Mammary epithelial cell (primary cell): ENCODE measurements at regions of chr6 and their contacts with region 1.

Region 1: DNA sequence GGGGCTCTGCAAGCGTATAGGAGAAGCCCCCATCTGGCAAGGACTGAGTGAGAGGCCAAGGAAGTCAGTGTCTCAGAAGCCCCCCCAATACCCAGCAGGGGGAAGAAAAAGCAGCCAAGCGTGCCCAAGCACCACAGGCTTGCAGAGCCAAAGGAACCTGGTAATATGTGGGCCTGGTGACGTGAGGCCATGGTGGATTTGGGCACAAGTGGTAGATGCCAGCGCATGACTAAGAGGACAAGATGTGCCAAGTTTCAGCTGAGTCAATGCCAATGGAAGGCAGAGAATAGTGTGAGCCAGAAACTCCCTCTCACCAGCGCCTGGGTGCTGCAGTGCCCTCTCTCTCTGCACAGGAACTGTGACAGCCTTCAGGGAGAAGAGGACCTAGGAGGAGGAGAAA is 110.0 kb downstream of the QRSL1 start:
- DNase-seq: peak; percentile 99
- H3K4me3 ChIP-seq: no peak overlapping the region
- H3K27ac ChIP-seq: peak overlapping the region; percentile 90
- H3K4me1 ChIP-seq: peaks cover 50% of the 10 kb centered on the region
- H3K27me3 ChIP-seq: no peaks in the 10 kb centered on the region
- CTCF ChIP-seq: peak; percentile 11 to 50

Region 2: DNA sequence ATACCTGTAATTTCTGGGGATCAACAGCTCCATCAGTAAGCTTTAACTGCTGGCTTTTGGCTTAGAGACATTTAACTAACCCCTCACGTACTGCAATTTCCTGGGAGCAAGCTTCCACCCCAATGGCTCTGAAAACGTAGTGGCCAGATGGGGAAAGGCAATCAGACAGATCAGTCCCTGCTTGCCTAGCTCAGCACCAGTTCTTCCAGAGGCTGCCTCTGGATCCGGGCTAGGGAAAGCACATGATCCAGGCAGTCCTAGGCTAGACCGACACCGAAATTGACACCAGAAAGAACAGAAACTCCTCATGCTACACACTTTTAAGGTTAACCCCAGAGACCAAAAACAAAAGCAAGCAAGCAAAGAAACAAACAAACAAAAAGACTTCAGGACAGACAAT is 1349.8 kb before region 1 on chr6:
- CTCF ChIA-PET with region 1: no interaction called
- dilution Hi-C with region 1: no loop called
- in situ Hi-C with region 1: no loop called
- intact Hi-C with region 1: no loop called
- DNase-seq: no peak
- H3K4me3 ChIP-seq: no peak overlapping the region
- H3K27ac ChIP-seq: no peak overlapping the region
- H3K4me1 ChIP-seq: no peaks in the 10 kb centered on the region
- H3K27me3 ChIP-seq: no peaks in the 10 kb centered on the region
- CTCF ChIP-seq: no peak

Region 3: DNA sequence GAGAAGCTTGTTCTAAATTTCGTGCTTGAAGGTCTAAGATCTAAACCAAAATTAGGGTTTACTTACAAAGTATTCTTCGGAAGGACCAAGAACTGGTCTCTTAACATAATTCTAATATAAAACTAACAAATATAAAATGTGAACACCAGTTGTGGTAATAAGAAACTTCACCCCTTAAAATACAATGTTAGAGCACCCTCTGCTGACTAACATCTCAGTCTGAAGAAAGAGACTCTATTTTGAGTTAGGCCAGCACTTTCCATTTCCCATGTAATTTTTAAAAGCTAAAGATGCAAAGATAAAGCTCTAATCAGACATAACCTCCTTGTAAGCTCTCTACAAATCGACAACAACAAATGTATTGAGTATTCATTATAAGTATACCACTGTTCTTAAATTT is 438.4 kb before region 1 on chr6:
- CTCF ChIA-PET with region 1: no interaction called
- dilution Hi-C with region 1: no loop called
- in situ Hi-C with region 1: no loop called
- intact Hi-C with region 1: no loop called
- DNase-seq: peak; percentile 42
- H3K4me3 ChIP-seq: no peak overlapping the region
- H3K27ac ChIP-seq: no peak overlapping the region
- H3K4me1 ChIP-seq: no peaks in the 10 kb centered on the region
- H3K27me3 ChIP-seq: no peaks in the 10 kb centered on the region
- CTCF ChIP-seq: peak; percentile 42 to 54

Region 4: DNA sequence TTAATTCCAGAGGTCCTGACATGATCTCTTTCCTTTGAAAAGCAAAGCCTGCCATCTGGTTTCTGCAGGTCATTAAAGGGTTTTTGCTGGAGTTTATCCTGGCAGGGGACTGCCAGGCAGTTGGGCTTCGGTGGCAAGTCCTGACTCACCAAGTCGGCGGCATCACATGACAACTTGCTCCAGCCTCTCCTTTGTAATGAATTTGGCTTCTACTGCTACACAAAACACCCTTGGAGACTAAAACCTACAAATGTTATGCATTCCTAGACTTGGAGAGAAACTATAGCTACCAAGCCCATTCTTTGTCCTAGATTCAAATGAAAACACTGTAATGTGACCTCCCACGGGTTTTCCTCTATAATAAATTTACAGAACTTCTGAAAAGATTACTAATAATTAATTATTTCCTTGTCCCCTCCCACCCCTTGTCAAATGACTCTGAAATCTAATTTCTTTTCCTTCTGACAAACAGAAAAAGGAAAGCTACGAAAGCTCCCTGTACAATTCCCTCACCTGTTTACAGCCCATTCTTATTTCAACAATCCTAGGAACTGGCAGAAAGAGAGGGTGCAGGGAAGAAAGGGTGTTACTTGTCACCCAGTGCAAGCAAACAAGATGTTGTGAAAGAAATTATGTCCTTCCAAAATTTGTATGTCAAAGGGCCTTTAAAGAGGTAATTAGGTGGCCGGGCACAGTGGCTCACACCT is 47.1 kb before region 1 on chr6:
- CTCF ChIA-PET with region 1: no interaction called
- dilution Hi-C with region 1: no loop called
- in situ Hi-C with region 1: no loop called
- intact Hi-C with region 1: loop called (anchors 1 kb)
- DNase-seq: peak; percentile 70
- H3K4me3 ChIP-seq: no peak overlapping the region
- H3K27ac ChIP-seq: no peak overlapping the region
- H3K4me1 ChIP-seq: peaks cover 15% of the 10 kb centered on the region
- H3K27me3 ChIP-seq: no peaks in the 10 kb centered on the region
- CTCF ChIP-seq: no peak

Region 5: DNA sequence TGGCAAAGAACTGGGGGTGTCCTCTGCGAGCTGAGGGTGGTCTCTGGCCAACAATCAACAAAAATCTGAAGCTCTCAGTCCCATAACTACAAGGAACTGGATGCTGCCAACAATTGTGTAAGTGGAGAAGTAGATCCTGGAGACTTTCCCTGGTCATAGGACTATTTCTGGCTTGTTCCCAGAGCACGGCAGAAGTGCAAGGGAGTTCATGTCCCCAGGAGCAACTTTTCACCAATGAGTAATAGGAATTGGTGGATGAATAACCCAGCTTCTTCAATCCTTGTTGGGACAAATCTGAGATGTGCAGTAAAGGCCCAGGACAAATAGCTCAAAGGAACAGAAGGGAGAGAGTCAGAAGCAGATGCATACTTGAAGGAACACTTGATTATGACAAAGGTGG is 14.5 kb before region 1 on chr6:
- CTCF ChIA-PET with region 1: no interaction called
- dilution Hi-C with region 1: no loop called
- in situ Hi-C with region 1: no loop called
- intact Hi-C with region 1: loop called (anchors 1 kb)
- DNase-seq: peak; percentile 78
- H3K4me3 ChIP-seq: no peak overlapping the region
- H3K27ac ChIP-seq: peak overlapping the region; percentile 4
- H3K4me1 ChIP-seq: peaks cover 27% of the 10 kb centered on the region
- H3K27me3 ChIP-seq: no peaks in the 10 kb centered on the region
- CTCF ChIP-seq: no peak

Region 6: GRCh38 chr6:106757267-106757666 is 17.9 kb after region 1 on chr6:
- CTCF ChIA-PET with region 1: no interaction called
- dilution Hi-C with region 1: no loop called
- in situ Hi-C with region 1: no loop called
- intact Hi-C with region 1: no loop called
- DNase-seq: no peak
- H3K4me3 ChIP-seq: no peak overlapping the region
- H3K27ac ChIP-seq: no peak overlapping the region
- H3K4me1 ChIP-seq: peaks cover under 1% of the 10 kb centered on the region
- H3K27me3 ChIP-seq: no peaks in the 10 kb centered on the region
- CTCF ChIP-seq: no peak